Activated CD4-positive, alpha-beta memory T cell treated with anti-CD3 and anti-CD28 coated beads for 36 hours (primary cell): ENCODE measurements at regions of chr21 and their contacts with region 1.

Region 1: DNA sequence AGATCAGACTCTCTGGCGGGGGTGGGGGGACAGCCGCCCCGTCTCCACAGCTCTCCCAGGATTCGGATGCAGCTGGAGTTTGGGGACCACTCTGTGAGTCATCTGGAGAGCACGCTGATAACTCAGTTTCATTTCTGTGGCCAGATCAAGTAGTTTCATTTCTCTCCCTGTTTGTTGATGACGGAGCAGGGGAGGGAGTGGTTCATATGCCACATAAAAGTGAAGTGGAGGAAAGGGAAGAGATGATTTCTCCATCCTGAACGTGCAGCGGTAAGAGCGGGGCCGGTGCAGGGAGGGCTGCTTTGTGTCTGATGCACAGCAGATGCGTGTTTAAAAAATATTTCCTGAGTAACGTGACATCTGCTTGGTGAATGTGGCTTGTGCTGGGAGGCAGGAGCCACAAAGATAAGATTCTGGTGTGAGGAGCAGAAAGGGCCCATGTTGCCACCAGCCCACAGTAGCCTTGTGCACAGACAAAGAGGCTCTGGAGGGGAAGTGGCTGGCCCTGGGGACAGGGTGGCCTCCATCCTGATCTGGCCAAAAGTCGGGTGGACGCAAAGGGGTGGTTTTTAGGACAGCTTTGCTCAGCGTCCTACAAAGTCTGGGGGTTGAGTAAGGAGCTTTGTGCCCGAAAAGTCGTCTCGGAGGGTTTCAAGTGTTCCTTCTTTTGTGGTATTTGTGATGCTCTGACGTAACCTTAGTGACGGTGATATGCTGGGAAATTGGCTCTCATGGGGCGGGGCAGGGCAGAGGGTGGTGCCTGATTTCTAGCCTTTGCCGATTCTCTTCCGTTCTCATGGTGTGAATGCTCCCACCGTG is at the start of gene MX2:
- DNase-seq: peak; percentile 88
- H3K4me3 Mint-ChIP-seq: peak within 1 kb of the TSS; percentile 84
- H3K27ac Mint-ChIP-seq: peak within 1 kb of the TSS; percentile 95
- H3K4me1 Mint-ChIP-seq: peaks cover 48% of the 10 kb centered on the region
- H3K27me3 Mint-ChIP-seq: no peaks in the 10 kb centered on the region
- total RNA-seq, gene MX2: 25.3 to 26.9 TPM

Region 2: DNA sequence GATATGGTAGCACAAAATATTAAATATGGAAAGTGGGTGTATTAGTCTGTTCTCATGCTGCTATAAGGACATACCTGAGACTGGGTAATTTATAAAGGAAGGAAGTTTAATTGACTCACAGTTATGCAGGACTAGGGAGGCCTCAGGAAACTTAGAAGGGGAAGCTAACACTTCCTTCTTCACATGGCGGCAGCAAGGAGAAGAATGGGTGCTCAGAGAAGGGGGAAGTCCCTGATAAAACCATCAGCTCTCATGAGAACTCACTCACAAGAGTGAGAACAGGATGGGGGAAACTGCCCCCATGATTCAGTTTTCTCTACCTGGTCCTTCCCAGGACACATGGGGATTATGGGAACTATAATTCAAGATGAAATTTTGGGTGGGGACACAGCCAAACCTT is 209.8 kb before region 1 on chr21:
- CTCF ChIA-PET with region 1: no interaction called
- POLR2A ChIA-PET with region 1: no interaction called
- intact Hi-C with region 1: no loop called
- DNase-seq: no peak
- H3K4me3 Mint-ChIP-seq: no peak overlapping the region
- H3K27ac Mint-ChIP-seq: no peak overlapping the region
- H3K4me1 Mint-ChIP-seq: no peaks in the 10 kb centered on the region
- H3K27me3 Mint-ChIP-seq: peaks cover 15% of the 10 kb centered on the region

Region 3: GRCh38 chr21:41269535-41269934 is 92.5 kb before region 1 on chr21:
- CTCF ChIA-PET with region 1: no interaction called
- POLR2A ChIA-PET with region 1: no interaction called
- intact Hi-C with region 1: no loop called
- DNase-seq: no peak
- H3K4me3 Mint-ChIP-seq: no peak overlapping the region
- H3K27ac Mint-ChIP-seq: no peak overlapping the region
- H3K4me1 Mint-ChIP-seq: no peaks in the 10 kb centered on the region
- H3K27me3 Mint-ChIP-seq: peaks cover 20% of the 10 kb centered on the region

Region 4: DNA sequence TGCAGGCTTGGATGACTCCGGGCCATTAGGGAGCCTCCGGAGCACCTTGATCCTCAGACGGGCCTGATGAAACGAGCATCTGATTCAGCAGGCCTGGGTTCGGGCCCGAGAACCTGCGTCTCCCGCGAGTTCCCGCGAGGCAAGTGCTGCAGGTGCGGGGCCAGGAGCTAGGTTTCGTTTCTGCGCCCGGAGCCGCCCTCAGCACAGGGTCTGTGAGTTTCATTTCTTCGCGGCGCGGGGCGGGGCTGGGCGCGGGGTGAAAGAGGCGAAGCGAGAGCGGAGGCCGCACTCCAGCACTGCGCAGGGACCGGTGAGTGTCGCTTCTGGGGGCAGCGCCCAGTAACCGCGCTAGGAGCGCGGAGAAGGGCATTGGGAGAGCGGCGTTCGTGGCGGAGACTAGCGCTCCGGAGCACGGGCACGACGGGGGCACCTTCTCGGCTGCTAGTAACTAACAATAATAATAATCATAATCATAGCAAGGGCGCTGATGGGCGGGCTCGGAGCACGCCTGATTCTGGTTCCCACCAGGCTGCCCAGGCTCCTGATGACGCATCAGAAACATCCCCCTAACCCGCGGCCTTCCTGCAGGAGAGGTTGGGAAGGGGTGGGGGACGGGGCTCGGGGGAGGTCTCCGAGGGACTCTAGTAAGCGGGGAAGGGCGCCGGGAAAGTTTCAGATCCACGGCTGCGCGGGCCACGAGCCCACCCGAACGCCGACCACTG is 64.1 kb after region 1 on chr21 and contains the start of gene MX1:
- CTCF ChIA-PET with region 1: no interaction called
- POLR2A ChIA-PET with region 1: interaction called, 3 read pairs
- intact Hi-C with region 1: loop called (anchors 1 kb)
- DNase-seq: peak; percentile 93
- H3K4me3 Mint-ChIP-seq: peak within 1 kb of the TSS; percentile 92
- H3K27ac Mint-ChIP-seq: peak within 1 kb of the TSS; percentile 87
- H3K4me1 Mint-ChIP-seq: peaks cover 27% of the 10 kb centered on the region
- H3K27me3 Mint-ChIP-seq: no peaks in the 10 kb centered on the region
- total RNA-seq, gene MX1: 106 TPM

Region 5: GRCh38 chr21:41564871-41565274 is 202.9 kb after region 1 on chr21:
- CTCF ChIA-PET with region 1: no interaction called
- POLR2A ChIA-PET with region 1: no interaction called
- intact Hi-C with region 1: loop called (anchors 10 kb)
- DNase-seq: peak; percentile 48
- H3K4me3 Mint-ChIP-seq: no peak overlapping the region
- H3K27ac Mint-ChIP-seq: no peak overlapping the region
- H3K4me1 Mint-ChIP-seq: peaks cover 9% of the 10 kb centered on the region
- H3K27me3 Mint-ChIP-seq: peaks cover 32% of the 10 kb centered on the region